ENCODE measurements at regions of chr1 and their contacts with region 1.

Region 1: GRCh38 chr1:101288491-101288944 is 51.7 kb downstream of the S1PR1 start:
- DNase-seq: peak; percentile 77 to 82 (median 80)
- H3K4me3 ChIP-seq: no peak overlapping the region
- H3K4me3 Mint-ChIP-seq: peak overlapping the region in 7 of 8 donors; percentile 12 to 78 (median 18)
- H3K27ac ChIP-seq: no peak overlapping the region
- H3K27ac Mint-ChIP-seq: peak overlapping the region; percentile 76 to 87 (median 86)
- H3K4me1 ChIP-seq: peaks cover 89% of the 10 kb centered on the region
- H3K4me1 Mint-ChIP-seq: peaks cover 58 to 90% (median 71%) of the 10 kb centered on the region in 4 donors
- H3K27me3 ChIP-seq: no peaks in the 10 kb centered on the region
- H3K27me3 Mint-ChIP-seq: no peaks in the 10 kb centered on the region

Region 2: GRCh38 chr1:100895540-100896483 is 392.7 kb before region 1 on chr1 and contains the start of gene SLC30A7:
- CTCF ChIA-PET with region 1: no interaction called
- POLR2A ChIA-PET with region 1: interaction called, 18 read pairs
- intact Hi-C with region 1: loop called (anchors 1 kb)
- DNase-seq: peak; percentile 93 to 98 (median 95)
- H3K4me3 ChIP-seq: peak within 1 kb of the TSS; percentile 96 to 98
- H3K4me3 Mint-ChIP-seq: peak within 1 kb of the TSS; percentile 94 to 100 (median 100)
- H3K27ac ChIP-seq: peak within 1 kb of the TSS; percentile 100
- H3K27ac Mint-ChIP-seq: peak within 1 kb of the TSS; percentile 99 to 100 (median 100)
- H3K4me1 ChIP-seq: peaks cover 44% of the 10 kb centered on the region
- H3K4me1 Mint-ChIP-seq: peaks cover 28 to 60% (median 39%) of the 10 kb centered on the region in 4 donors
- H3K27me3 ChIP-seq: no peaks in the 10 kb centered on the region
- H3K27me3 Mint-ChIP-seq: no peaks in the 10 kb centered on the region
- total RNA-seq, gene SLC30A7: 54.9 TPM

Region 3: DNA sequence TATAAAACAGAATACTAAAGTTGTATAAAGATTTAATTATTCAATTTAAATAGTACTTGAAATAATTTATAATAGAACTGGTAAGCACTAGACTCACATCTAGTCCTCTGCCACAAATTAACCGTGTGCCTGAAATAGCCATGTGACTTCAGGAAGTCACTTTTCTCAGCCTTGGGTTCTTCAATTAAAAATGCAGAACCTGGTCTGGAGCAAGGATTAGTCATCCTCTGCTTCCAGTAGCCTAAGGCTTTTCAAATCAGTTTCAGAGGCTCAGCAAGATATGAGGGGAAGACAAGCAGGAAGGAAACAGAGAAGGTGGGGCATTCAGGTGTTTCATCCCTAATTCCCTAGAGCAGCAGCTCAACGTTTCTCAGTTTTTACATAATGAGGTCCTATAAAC is 286.0 kb before region 1 on chr1:
- CTCF ChIA-PET with region 1: interaction called, 11 read pairs
- POLR2A ChIA-PET with region 1: interaction called, 3 read pairs
- intact Hi-C with region 1: no loop called
- DNase-seq: no peak
- H3K4me3 ChIP-seq: no peak overlapping the region
- H3K4me3 Mint-ChIP-seq: peak overlapping the region in 3 of 8 donors; percentile 10 to 71 (median 54)
- H3K27ac ChIP-seq: no peak overlapping the region
- H3K27ac Mint-ChIP-seq: peak overlapping the region; percentile 44 to 90 (median 76)
- H3K4me1 ChIP-seq: peaks cover 58% of the 10 kb centered on the region
- H3K4me1 Mint-ChIP-seq: peaks cover 46 to 64% (median 50%) of the 10 kb centered on the region in 4 donors
- H3K27me3 ChIP-seq: no peaks in the 10 kb centered on the region
- H3K27me3 Mint-ChIP-seq: no peaks in the 10 kb centered on the region

Region 4: DNA sequence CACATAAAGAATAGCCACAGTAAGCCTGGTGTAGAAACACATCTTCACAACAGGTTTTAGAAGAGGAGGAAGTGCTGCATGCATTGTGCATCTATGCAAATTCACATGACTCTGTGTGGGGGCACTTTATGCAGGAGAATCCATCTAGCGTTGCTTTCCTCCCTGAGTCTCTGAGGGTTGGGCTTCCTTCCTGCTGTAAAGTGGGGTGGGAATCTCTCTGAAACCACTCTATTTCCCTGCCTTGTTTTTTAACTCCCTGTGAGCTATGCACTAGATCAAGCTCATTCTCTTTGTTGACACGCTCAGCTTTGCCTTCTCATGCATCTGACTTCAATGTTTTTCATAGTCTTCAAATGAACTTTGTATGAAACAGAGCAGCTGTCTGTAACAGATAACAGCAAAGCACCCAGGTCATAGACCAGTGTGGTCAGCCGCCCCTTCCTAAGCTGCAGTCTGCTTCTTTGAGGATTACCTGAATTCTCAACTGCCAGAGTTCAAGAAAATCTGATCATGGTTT is 160.2 kb before region 1 on chr1:
- CTCF ChIA-PET with region 1: interaction called, 13 read pairs
- POLR2A ChIA-PET with region 1: interaction called, 4 read pairs
- intact Hi-C with region 1: no loop called
- DNase-seq: peak in 4 of 5 donors; percentile 17 to 42 (median 26)
- H3K4me3 ChIP-seq: no peak overlapping the region
- H3K4me3 Mint-ChIP-seq: peak overlapping the region; percentile 56 to 85 (median 72)
- H3K27ac ChIP-seq: peak overlapping the region; percentile 50
- H3K27ac Mint-ChIP-seq: peak overlapping the region; percentile 68 to 96 (median 89)
- H3K4me1 ChIP-seq: peaks cover 52% of the 10 kb centered on the region
- H3K4me1 Mint-ChIP-seq: peaks cover 45 to 73% (median 58%) of the 10 kb centered on the region in 4 donors
- H3K27me3 ChIP-seq: no peaks in the 10 kb centered on the region
- H3K27me3 Mint-ChIP-seq: no peaks in the 10 kb centered on the region

Region 5: DNA sequence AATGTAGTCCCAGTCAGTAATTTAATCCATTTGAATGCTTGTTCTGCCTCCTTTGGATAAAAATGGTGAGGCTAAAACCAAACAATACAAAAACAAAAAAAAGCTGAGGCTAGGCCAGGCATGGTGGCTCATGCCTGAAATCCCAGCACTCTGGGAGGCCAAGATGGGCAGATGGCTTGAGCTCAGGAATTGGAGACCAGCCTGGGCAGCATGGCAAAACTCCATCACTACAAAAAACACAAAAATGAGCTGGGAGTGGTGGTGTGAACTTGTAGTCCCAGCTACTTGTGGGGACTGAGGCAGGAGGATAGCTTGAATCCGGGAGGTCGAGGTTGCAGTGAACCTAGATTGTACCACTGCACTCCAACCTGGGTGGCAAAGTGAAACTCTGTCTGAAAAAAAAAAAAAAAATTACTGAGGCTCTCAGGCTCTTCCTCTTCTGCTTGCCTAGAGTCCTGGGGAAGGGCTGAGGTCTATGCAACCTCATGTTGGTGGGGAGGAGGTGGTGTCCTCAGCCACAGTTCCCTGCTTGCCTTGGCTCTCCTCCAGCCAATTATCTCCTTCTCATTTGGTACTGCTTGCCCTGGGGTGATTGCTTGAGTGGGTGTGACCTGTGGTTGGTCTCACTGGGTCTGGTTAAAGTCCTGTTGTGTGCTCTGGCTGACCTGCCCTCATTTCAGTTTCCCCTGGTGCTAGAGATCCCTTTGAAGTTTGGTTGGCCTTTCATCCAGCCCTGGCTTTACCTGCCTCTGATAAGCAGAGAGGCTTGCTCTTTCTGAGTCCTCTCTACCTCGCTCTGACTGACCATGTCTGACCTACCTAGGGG is 30.8 kb before region 1 on chr1:
- CTCF ChIA-PET with region 1: interaction called, 112 read pairs
- POLR2A ChIA-PET with region 1: interaction called, 955 read pairs
- intact Hi-C with region 1: no loop called
- DNase-seq: peak; percentile 48 to 68 (median 56)
- H3K4me3 ChIP-seq: no peak overlapping the region
- H3K4me3 Mint-ChIP-seq: peak overlapping the region; percentile 26 to 78 (median 70)
- H3K27ac ChIP-seq: peak overlapping the region; percentile 8
- H3K27ac Mint-ChIP-seq: peak overlapping the region; percentile 73 to 92 (median 88)
- H3K4me1 ChIP-seq: peaks cover 58% of the 10 kb centered on the region
- H3K4me1 Mint-ChIP-seq: peaks cover 54 to 72% (median 65%) of the 10 kb centered on the region in 4 donors
- H3K27me3 ChIP-seq: no peaks in the 10 kb centered on the region
- H3K27me3 Mint-ChIP-seq: no peaks in the 10 kb centered on the region

Region 6: DNA sequence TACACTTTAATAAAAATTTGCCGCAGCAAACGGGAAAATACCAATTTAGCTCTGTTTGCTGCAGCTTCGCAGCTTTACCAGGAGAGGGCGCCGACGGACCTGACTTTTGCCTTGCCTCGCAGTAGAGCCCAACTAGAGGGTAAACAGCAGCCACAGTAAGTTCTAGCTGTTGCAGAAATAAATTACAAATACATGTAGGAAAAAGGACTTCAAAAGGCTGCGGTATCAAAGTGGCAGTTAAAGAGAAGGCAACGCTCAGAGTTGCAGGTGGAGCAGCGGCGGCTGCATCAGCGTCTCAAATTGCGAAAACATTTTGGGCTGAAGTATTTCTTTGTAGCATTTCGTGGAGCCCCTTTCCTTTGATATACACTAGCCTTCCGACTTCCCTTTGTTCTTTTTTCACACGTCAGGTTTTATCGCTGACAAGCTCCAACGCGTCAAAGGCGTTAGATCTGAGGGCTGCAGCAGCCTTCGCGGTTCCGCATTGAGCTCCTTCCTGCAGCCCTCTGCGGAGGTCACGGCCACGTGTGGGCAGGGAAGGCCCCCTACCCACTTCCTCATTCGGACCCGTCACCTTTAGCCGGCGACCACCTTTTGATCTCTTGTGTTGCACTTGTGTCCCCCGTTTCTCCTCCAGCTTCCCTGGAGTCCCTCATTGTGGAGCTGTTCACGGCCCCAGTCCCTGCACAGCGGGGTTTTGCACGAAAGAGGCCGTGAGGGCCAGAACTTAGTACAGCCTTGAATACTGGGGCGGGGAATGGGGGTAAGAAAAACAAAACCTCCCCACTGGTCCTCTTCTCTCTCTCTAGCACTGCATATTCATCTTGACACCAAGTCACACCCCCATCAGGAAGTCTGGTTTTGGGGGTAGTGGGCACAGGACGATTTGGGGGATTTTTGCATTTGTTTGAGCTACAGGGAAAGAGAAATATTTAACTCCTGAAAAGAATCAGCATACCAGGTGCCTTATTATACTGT is 21.1 kb after region 1 on chr1:
- CTCF ChIA-PET with region 1: interaction called, 180 read pairs
- POLR2A ChIA-PET with region 1: interaction called, 45 read pairs
- intact Hi-C with region 1: no loop called
- DNase-seq: peak; percentile 86 to 92 (median 89)
- H3K4me3 ChIP-seq: peak overlapping the region; percentile 9 to 55
- H3K4me3 Mint-ChIP-seq: peak overlapping the region; percentile 80 to 88 (median 86)
- H3K27ac ChIP-seq: peak overlapping the region; percentile 79
- H3K27ac Mint-ChIP-seq: peak overlapping the region; percentile 97 to 99 (median 98)
- H3K4me1 ChIP-seq: peaks cover 56% of the 10 kb centered on the region
- H3K4me1 Mint-ChIP-seq: peaks cover 50 to 78% (median 63%) of the 10 kb centered on the region in 4 donors
- H3K27me3 ChIP-seq: no peaks in the 10 kb centered on the region
- H3K27me3 Mint-ChIP-seq: no peaks in the 10 kb centered on the region

Region 7: GRCh38 chr1:101667761-101668160 is 379.2 kb after region 1 on chr1:
- CTCF ChIA-PET with region 1: no interaction called
- POLR2A ChIA-PET with region 1: no interaction called
- intact Hi-C with region 1: no loop called
- DNase-seq: no peak
- H3K4me3 ChIP-seq: no peak overlapping the region
- H3K4me3 Mint-ChIP-seq: no peak overlapping the region
- H3K27ac ChIP-seq: no peak overlapping the region
- H3K27ac Mint-ChIP-seq: no peak overlapping the region
- H3K4me1 ChIP-seq: no peaks in the 10 kb centered on the region
- H3K4me1 Mint-ChIP-seq: no peaks in the 10 kb centered on the region
- H3K27me3 ChIP-seq: no peaks in the 10 kb centered on the region
- H3K27me3 Mint-ChIP-seq: peaks cover 0 to 1% of the 10 kb centered on the region in 2 donors